ENCODE measurements at regions of chr9 and their contacts with region 1.

Region 1: GRCh38 chr9:127779136-127779981 is 893 bp upstream of the SH2D3C start:
- DNase-seq: no peak
- H3K4me3 ChIP-seq: no peak overlapping the region
- H3K27ac ChIP-seq: no peak overlapping the region; the same call in 1 of the 2 replicates
- H3K4me1 ChIP-seq: peaks cover 0 to 20% (median 15%) of the 10 kb centered on the region in 4 experiments; a peak in 6 of 7 replicates
- H3K27me3 ChIP-seq: no peaks in the 10 kb centered on the region
- CTCF ChIP-seq: no peak
- EP300 ChIP-seq: no peak
- POLR2A ChIP-seq: no peak
- RAD21 ChIP-seq: no peak

Region 2: GRCh38 chr9:127586537-127586936 is 192.8 kb before region 1 on chr9:
- CTCF ChIA-PET with region 1: no interaction called
- POLR2A ChIA-PET with region 1: no interaction called
- DNase-seq: peak in 1 of 2 experiments; percentile 75
- H3K4me3 ChIP-seq: no peak overlapping the region
- H3K27ac ChIP-seq: no peak overlapping the region
- H3K4me1 ChIP-seq: peaks cover 0 to 3% (median 0%) of the 10 kb centered on the region in 4 experiments; a peak in 2 of 7 replicates
- H3K27me3 ChIP-seq: no peaks in the 10 kb centered on the region
- CTCF ChIP-seq: peak; percentile 88 to 95 (median 94)
- EP300 ChIP-seq: no peak
- POLR2A ChIP-seq: no peak
- RAD21 ChIP-seq: peak; percentile 89 to 92

Region 3: DNA sequence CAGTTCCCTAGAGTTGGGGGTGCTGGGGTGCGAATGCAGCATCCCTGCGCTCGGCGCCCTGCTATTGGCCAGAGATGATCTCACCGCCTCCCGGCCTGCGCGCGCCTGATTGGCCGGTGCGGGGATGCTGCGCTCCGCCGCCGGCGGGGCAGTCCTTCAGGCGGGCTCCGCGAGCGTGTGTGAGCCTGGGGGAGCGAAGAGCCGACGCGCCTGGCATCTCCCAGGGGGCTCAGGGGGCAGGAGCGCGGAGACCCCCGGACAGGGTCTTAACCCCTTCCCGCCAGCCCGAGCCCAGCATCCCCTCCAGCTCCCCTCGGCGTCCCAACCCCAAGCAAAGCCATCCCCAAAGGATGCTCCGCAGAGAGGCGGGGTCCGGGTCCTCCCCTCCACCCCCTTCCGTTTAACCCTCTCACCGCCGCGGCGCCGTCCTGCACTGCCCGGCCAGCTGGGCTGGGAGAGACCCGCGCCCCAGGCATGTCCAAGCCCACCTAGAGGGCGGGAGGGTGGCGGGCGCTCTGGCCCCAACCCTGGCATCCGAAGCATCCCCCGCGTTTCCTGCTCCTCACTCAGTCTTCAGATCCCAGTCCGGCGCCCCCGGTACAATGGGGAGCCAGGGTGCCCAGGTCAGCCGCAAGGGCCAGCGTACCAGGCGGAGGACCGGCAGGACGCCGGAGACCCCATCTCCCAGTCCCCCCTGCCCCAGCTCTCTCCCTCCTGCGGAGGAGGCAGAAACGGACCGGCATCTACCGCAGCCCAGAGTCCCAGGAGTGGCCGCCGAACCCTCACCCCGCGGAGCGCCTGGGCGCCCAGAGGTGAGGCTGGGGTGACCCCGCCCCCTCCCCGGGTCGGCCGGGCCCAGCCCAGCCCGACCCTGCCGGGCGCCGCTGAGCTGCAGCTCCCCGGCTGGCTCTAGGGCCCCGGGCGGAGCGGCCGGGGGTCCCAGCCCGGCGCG is 25.0 kb before region 1 on chr9:
- CTCF ChIA-PET with region 1: interaction called, 18 read pairs
- POLR2A ChIA-PET with region 1: interaction called, 3 read pairs
- DNase-seq: peak in 1 of 2 experiments; percentile 90
- H3K4me3 ChIP-seq: peak overlapping the region; percentile 59 to 96 (median 76)
- H3K27ac ChIP-seq: no peak overlapping the region; the same call in 1 of the 2 replicates
- H3K4me1 ChIP-seq: peaks cover 0 to 4% (median 1%) of the 10 kb centered on the region in 4 experiments; a peak in 4 of 7 replicates
- H3K27me3 ChIP-seq: peaks cover 0 to 16% (median 8%) of the 10 kb centered on the region in 4 experiments; a peak in 6 of 7 replicates
- CTCF ChIP-seq: no peak
- EP300 ChIP-seq: no peak
- POLR2A ChIP-seq: peak in 1 of 2 experiments; percentile 29; a peak in 1 of 3 replicates
- RAD21 ChIP-seq: no peak

Region 4: GRCh38 chr9:127763918-127764384 is 15.4 kb before region 1 on chr9:
- CTCF ChIA-PET with region 1: interaction called, 227 read pairs
- POLR2A ChIA-PET with region 1: interaction called, 6 read pairs
- DNase-seq: peak in 1 of 2 experiments; percentile 85
- H3K4me3 ChIP-seq: 0 out of 8 replicates have a peak overlapping the region, but pooled peaks of 1 of the 4 experiments have one; percentile 0
- H3K27ac ChIP-seq: no peak overlapping the region
- H3K4me1 ChIP-seq: peaks cover 0 to 20% (median 14%) of the 10 kb centered on the region in 4 experiments; a peak in 6 of 7 replicates
- H3K27me3 ChIP-seq: no peaks in the 10 kb centered on the region
- CTCF ChIP-seq: peak; percentile 76 to 89 (median 77)
- EP300 ChIP-seq: no peak
- POLR2A ChIP-seq: no peak
- RAD21 ChIP-seq: peak; percentile 77 to 78

Region 5: DNA sequence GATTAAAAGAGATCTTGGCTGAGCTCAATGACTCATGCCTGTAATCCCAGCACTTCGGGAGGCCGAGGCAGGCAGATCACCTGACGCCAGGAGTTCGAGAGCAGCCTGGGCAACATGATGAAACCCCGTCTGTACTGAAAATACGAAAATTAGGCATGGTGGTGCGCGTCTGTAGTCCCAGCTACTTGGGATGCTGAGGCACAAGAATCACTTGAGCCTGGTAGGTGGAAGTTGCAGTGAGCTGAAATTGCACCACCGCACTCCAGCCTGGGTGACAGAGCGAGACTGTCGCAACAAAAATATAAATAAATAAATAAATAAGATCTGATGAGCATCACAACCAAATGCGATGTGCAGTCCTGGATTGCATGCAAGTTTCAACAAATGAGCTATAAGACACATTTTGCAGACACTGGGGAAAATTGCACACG is 83.8 kb after region 1 on chr9:
- CTCF ChIA-PET with region 1: no interaction called
- POLR2A ChIA-PET with region 1: no interaction called
- DNase-seq: no peak
- H3K4me3 ChIP-seq: no peak overlapping the region
- H3K27ac ChIP-seq: no peak overlapping the region
- H3K4me1 ChIP-seq: peaks cover 0 to 3% (median under 1%) of the 10 kb centered on the region in 4 experiments; a peak in 1 of 7 replicates
- H3K27me3 ChIP-seq: no peaks in the 10 kb centered on the region; a peak in 1 of 7 replicates
- CTCF ChIP-seq: no peak
- EP300 ChIP-seq: no peak
- POLR2A ChIP-seq: no peak
- RAD21 ChIP-seq: no peak

Measured in H1 (cell line).